ENCODE measurements at regions of chr20 and their contacts with region 1.

Region 1: DNA sequence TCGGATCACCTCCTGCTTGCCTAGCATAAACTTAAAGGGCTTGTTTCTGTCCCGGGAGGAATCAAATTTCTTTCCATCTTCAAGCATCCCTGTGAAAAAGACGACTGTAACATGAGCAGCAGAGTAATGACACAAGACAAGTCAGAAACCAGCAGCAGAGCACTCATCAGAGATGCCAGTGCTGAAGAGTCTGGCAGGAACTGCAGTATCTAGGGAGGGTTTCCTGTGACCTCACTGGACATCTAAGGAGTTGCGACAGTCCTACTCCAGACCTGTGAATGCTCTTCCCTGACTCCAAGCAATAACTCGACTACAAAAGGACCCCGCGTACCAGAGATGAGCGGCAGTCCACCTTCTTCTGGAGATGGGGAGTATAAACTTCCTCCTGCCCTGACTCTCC is 17.3 kb downstream of the FKBP1A start:
- DNase-seq: no peak
- ATAC-seq: no peak
- H3K4me3 ChIP-seq: no peak overlapping the region
- H3K4me3 Mint-ChIP-seq: no peak overlapping the region
- H3K27ac ChIP-seq: peak overlapping the region in 1 of 2 donors; percentile 60
- H3K27ac Mint-ChIP-seq: no peak overlapping the region
- H3K4me1 ChIP-seq: peaks cover 37 to 45% of the 10 kb centered on the region in 2 donors
- H3K4me1 Mint-ChIP-seq: peaks cover 54% of the 10 kb centered on the region
- H3K27me3 ChIP-seq: no peaks in the 10 kb centered on the region
- H3K27me3 Mint-ChIP-seq: no peaks in the 10 kb centered on the region
- CTCF ChIP-seq: no peak

Region 2: GRCh38 chr20:1392823-1393506 is 17.4 kb after region 1 on chr20 and contains the start of gene FKBP1A:
- CTCF ChIA-PET with region 1: interaction called, 4 read pairs
- POLR2A ChIA-PET with region 1: no interaction called
- intact Hi-C with region 1: loop called (anchors 1 kb)
- DNase-seq: peak; percentile 97
- ATAC-seq: peak; percentile 88
- H3K4me3 ChIP-seq: peak within 1 kb of the TSS; percentile 66 to 93 (median 76)
- H3K4me3 Mint-ChIP-seq: peak within 1 kb of the TSS; percentile 100
- H3K27ac ChIP-seq: peak within 1 kb of the TSS; percentile 82 to 84
- H3K27ac Mint-ChIP-seq: peak within 1 kb of the TSS; percentile 100
- H3K4me1 ChIP-seq: peaks cover 64 to 66% of the 10 kb centered on the region in 2 donors
- H3K4me1 Mint-ChIP-seq: peaks cover 83% of the 10 kb centered on the region
- H3K27me3 ChIP-seq: no peaks in the 10 kb centered on the region
- H3K27me3 Mint-ChIP-seq: no peaks in the 10 kb centered on the region
- CTCF ChIP-seq: no peak
- total RNA-seq, gene FKBP1A: 86.5 and 86.7 TPM in 2 replicates

Measured in B cell (primary cell).